ENCODE measurements at regions of chr20 and their contacts with region 1.

Region 1: GRCh38 chr20:22691369-22692118 is 107.2 kb upstream of the FOXA2 start:
- DNase-seq: no peak
- H3K4me3 ChIP-seq: peak overlapping the region in 1 of 4 donors; percentile 42
- H3K27ac ChIP-seq: peak overlapping the region in 1 of 4 donors; percentile 11
- H3K4me1 ChIP-seq: peaks cover 0 to 14% (median 5%) of the 10 kb centered on the region in 3 donors
- H3K27me3 ChIP-seq: peaks cover 0 to 14% (median 0%) of the 10 kb centered on the region in 4 donors
- CTCF ChIP-seq: peak; percentile 44 to 91 (median 86)
- POLR2A ChIP-seq: no peak

Region 2: GRCh38 chr20:23019403-23019802 is 327.9 kb after region 1 on chr20:
- intact Hi-C with region 1: loop called (anchors 10 kb)
- DNase-seq: no peak
- H3K4me3 ChIP-seq: no peak overlapping the region
- H3K27ac ChIP-seq: no peak overlapping the region
- H3K4me1 ChIP-seq: no peaks in the 10 kb centered on the region
- H3K27me3 ChIP-seq: peaks cover 0 to 12% (median 0%) of the 10 kb centered on the region in 4 donors
- CTCF ChIP-seq: no peak
- POLR2A ChIP-seq: no peak

Region 3: DNA sequence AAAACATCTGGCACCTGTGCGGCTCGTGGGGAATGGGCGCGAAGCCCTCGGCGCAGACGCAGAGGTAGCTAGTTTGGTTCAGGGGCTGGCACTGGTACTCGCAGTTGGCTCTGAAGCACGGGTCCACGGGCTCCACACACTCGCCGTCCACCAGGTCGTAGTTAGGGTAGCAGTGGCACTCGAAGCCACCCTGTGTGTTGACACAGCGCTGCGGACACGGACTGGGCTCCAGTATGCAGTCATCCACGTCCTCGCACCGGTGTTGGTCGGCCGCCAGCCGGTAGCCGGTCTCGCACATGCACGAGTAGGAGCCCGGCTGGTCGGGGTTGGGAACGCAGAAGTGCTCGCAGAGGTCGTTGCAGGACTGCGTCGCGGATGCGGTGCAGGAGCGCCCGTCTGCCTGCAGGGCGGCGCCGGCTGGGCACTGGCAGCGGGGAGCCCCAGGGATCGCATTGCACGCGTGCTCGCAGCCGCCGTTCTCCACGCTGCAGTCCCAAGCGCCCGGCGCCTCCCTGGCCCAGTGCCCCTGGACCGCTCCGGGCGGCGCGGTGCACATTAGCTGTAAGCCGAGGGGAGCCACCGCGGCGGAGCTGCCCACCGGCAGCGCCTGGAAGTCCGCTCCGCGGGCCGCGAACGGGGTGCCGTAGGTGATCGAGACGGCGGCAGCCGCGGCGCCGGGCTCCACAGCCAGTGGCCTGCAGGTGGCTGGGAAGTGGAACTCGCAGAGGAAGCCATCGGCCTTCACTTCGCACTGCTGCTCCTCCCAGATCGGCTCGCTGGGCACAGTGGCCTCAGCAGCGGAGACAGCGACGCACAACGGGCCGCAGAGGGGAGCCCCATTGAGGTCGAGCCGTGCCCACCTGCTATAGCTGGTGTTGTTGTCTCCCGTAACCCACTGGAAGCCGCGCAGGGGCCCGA is 357.0 kb after region 1 on chr20:
- intact Hi-C with region 1: loop called (anchors 5 kb)
- DNase-seq: no peak
- H3K4me3 ChIP-seq: peak overlapping the region; percentile 45 to 78 (median 66)
- H3K27ac ChIP-seq: peak overlapping the region; percentile 93 to 98 (median 96)
- H3K4me1 ChIP-seq: peaks cover 13 to 85% (median 28%) of the 10 kb centered on the region in 3 donors
- H3K27me3 ChIP-seq: peaks cover 0 to 77% (median 0%) of the 10 kb centered on the region in 4 donors
- CTCF ChIP-seq: peak in 5 of 6 experiments; percentile 47 to 87 (median 63)
- POLR2A ChIP-seq: peak in 1 of 4 donors; percentile 36

Region 4: GRCh38 chr20:23200918-23201317 is 509.4 kb after region 1 on chr20:
- intact Hi-C with region 1: loop called (anchors 10 kb)
- DNase-seq: no peak
- H3K4me3 ChIP-seq: no peak overlapping the region
- H3K27ac ChIP-seq: no peak overlapping the region
- H3K4me1 ChIP-seq: peaks cover 13 to 42% (median 16%) of the 10 kb centered on the region in 3 donors
- H3K27me3 ChIP-seq: no peaks in the 10 kb centered on the region
- CTCF ChIP-seq: peak in 5 of 6 experiments; percentile 53 to 90 (median 74)
- POLR2A ChIP-seq: no peak

Region 5: DNA sequence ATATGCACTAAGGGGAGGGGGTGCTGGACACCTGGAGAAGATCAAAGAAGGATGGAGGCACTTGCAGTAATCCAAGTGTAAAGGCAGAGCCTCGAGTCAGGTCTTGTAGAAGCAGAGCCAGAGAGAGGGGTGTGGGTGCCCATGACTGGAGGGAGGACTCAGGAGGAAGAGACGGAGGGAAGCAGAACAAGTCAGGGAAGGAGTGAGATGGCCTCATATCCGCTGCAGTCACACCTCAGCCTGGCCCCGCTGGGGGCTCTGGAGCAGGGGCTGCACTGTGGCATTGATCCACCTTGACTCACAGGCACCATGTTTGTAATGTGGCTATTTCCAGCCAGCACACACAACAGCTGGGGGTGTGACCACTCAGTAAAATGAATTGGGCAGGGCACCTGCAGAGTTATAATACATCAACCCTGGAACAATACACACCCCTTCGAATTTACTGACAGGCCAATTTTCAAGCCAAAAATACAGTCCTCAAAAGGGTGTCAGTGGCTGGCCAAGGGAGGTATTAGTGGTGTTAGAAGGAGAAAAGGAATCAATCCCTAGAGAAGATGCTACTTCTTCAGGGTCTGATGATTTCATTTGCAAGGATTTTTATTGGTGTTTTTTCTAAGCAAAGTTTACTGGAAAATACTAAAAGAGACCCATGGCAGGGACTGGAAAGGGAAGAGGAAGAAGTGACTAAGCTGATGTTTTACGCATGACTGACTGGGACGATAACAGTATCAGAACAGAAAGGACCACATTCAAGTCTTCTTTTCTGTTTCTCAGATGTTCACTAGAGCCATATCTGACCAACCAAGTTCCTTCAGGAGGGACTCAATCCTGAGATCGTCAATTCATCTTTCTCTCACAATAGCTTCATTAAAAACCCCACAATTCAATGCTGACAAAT is 640.2 kb after region 1 on chr20:
- intact Hi-C with region 1: loop called (anchors 10 kb)
- DNase-seq: no peak
- H3K4me3 ChIP-seq: no peak overlapping the region
- H3K27ac ChIP-seq: no peak overlapping the region
- H3K4me1 ChIP-seq: peaks cover 0 to 15% (median 0%) of the 10 kb centered on the region in 3 donors
- H3K27me3 ChIP-seq: no peaks in the 10 kb centered on the region
- CTCF ChIP-seq: no peak
- POLR2A ChIP-seq: no peak

Measured in esophagus squamous epithelium (tissue), 5 donors.